Ovary (tissue), 10 donors: ENCODE measurements at regions of chr6 and their contacts with region 1.

Region 1: GRCh38 chr6:129130959-129131681 is 248.2 kb downstream of the LAMA2 start:
- DNase-seq: peak in 4 of 5 donors; percentile 43 to 74 (median 70)
- H3K4me3 ChIP-seq: no peak overlapping the region
- H3K27ac ChIP-seq: peak overlapping the region; percentile 13 to 60
- H3K4me1 ChIP-seq: peaks cover 16% of the 10 kb centered on the region
- H3K27me3 ChIP-seq: no peaks in the 10 kb centered on the region
- CTCF ChIP-seq: no peak
- EP300 ChIP-seq: peak; percentile 60
- POLR2A ChIP-seq: no peak

Region 2: DNA sequence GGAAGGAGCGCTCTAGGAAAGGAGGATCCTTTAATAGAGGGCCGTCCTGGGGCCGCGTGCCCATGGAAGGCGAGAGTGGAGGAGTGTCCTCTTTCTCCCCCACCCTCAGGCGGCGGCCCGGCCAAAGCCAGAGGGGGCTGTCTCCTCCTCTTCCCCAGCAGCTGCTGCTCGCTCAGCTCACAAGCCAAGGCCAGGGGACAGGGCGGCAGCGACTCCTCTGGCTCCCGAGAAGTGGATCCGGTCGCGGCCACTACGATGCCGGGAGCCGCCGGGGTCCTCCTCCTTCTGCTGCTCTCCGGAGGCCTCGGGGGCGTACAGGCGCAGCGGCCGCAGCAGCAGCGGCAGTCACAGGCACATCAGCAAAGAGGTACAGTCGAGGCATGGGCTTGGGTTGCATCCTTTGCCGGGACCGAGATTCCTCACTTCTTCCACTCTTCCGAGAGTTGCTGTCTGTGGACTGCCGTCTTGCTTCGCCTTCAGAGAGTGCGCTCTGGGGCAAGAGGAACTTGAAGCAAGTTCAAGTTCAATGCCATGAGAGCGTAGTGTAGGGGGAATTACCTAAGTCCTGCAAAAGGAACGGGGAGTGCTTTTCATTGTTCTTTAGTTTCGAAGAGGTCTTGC is 248.0 kb before region 1 on chr6 and contains the start of gene LAMA2:
- intact Hi-C with region 1: loop called in 1 of 4 experiments (anchors 10 kb)
- DNase-seq: peak; percentile 87 to 92 (median 89)
- H3K4me3 ChIP-seq: peak within 1 kb of the TSS; percentile 47
- H3K27ac ChIP-seq: peak within 1 kb of the TSS; percentile 54 to 90
- H3K4me1 ChIP-seq: peaks cover 4% of the 10 kb centered on the region
- H3K27me3 ChIP-seq: no peaks in the 10 kb centered on the region
- CTCF ChIP-seq: peak; percentile 33 to 56 (median 33)
- EP300 ChIP-seq: no peak
- POLR2A ChIP-seq: peak; percentile 87
- total RNA-seq, gene LAMA2: 42.5 to 226 (median 145) TPM

Region 3: GRCh38 chr6:129059650-129060049 is 71.5 kb before region 1 on chr6:
- intact Hi-C with region 1: no loop called
- DNase-seq: no peak
- H3K4me3 ChIP-seq: no peak overlapping the region
- H3K27ac ChIP-seq: no peak overlapping the region
- H3K4me1 ChIP-seq: peaks cover 1% of the 10 kb centered on the region
- H3K27me3 ChIP-seq: no peaks in the 10 kb centered on the region
- CTCF ChIP-seq: no peak
- EP300 ChIP-seq: no peak
- POLR2A ChIP-seq: no peak